Tibial artery (tissue), 4 donors: ENCODE measurements at regions of chr6 and their contacts with region 1.

Region 1: GRCh38 chr6:148250975-148251685 is 91.5 kb upstream of the SASH1 start:
- DNase-seq: no peak
- H3K4me3 ChIP-seq: no peak overlapping the region
- H3K27ac ChIP-seq: peak overlapping the region; percentile 11 to 20
- H3K4me1 ChIP-seq: peaks cover 0 to 40% (median 14%) of the 10 kb centered on the region in 4 donors
- H3K27me3 ChIP-seq: no peaks in the 10 kb centered on the region
- CTCF ChIP-seq: peak; percentile 64 to 77

Region 2: GRCh38 chr6:147699637-147700036 is 551.5 kb before region 1 on chr6:
- intact Hi-C with region 1: no loop called
- DNase-seq: no peak
- H3K4me3 ChIP-seq: no peak overlapping the region
- H3K27ac ChIP-seq: no peak overlapping the region
- H3K4me1 ChIP-seq: no peaks in the 10 kb centered on the region
- H3K27me3 ChIP-seq: no peaks in the 10 kb centered on the region
- CTCF ChIP-seq: no peak

Region 3: DNA sequence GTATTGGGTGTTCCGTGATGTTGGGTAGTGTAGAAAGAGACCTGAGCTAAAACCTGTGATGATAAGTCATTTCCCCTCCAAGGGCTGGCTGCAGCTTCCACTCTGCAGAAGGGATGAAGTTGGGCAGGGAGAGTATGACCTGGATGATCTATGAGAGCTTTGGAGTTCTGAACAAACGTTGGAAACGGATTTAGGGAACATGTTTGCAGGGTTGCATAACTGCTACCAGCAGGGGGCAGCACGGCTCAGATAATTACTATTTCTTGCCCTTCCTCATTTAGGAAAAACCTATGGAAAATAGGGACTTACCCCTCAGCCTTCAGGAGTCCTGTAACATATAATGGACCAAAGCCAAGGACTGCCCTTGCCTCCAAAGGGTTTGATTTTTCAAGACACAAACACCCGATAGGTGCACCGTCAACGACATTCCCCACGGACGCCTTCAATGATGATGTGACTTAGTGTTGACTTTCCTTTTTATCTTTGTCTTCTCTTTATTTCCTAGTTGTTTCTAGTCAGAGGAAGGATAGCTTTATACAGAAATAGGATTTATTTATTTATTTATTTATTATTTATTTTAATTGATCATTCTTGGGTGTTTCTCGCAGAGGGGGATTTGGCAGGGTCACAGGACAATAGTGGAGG is 73.4 kb before region 1 on chr6:
- intact Hi-C with region 1: loop called (anchors 5 kb)
- DNase-seq: peak; percentile 76
- H3K4me3 ChIP-seq: no peak overlapping the region
- H3K27ac ChIP-seq: no peak overlapping the region
- H3K4me1 ChIP-seq: no peaks in the 10 kb centered on the region
- H3K27me3 ChIP-seq: no peaks in the 10 kb centered on the region
- CTCF ChIP-seq: peak; percentile 78 to 90

Region 4: GRCh38 chr6:148451690-148452089 is 200.6 kb after region 1 on chr6:
- intact Hi-C with region 1: loop called (anchors 10 kb)
- DNase-seq: no peak
- H3K4me3 ChIP-seq: no peak overlapping the region
- H3K27ac ChIP-seq: no peak overlapping the region
- H3K4me1 ChIP-seq: no peaks in the 10 kb centered on the region
- H3K27me3 ChIP-seq: no peaks in the 10 kb centered on the region
- CTCF ChIP-seq: no peak